ENCODE measurements at regions of chr1 and their contacts with region 1.

Region 1: GRCh38 chr1:234373064-234373958 is at the start of gene COA6:
- DNase-seq: peak; percentile 78 to 96 (median 86)
- ATAC-seq: peak; percentile 79
- H3K4me3 ChIP-seq: peak within 1 kb of the TSS; percentile 79
- H3K4me3 Mint-ChIP-seq: peak within 1 kb of the TSS; percentile 97
- H3K27ac ChIP-seq: peak within 1 kb of the TSS; percentile 95 to 98
- H3K27ac Mint-ChIP-seq: peak within 1 kb of the TSS; percentile 99
- H3K4me1 ChIP-seq: peaks cover 36% of the 10 kb centered on the region
- H3K4me1 Mint-ChIP-seq: peaks cover 66% of the 10 kb centered on the region
- H3K27me3 ChIP-seq: no peaks in the 10 kb centered on the region
- H3K27me3 Mint-ChIP-seq: no peaks in the 10 kb centered on the region
- CTCF ChIP-seq: no peak
- total RNA-seq, gene COA6: 10.0 to 12.2 TPM

Region 2: DNA sequence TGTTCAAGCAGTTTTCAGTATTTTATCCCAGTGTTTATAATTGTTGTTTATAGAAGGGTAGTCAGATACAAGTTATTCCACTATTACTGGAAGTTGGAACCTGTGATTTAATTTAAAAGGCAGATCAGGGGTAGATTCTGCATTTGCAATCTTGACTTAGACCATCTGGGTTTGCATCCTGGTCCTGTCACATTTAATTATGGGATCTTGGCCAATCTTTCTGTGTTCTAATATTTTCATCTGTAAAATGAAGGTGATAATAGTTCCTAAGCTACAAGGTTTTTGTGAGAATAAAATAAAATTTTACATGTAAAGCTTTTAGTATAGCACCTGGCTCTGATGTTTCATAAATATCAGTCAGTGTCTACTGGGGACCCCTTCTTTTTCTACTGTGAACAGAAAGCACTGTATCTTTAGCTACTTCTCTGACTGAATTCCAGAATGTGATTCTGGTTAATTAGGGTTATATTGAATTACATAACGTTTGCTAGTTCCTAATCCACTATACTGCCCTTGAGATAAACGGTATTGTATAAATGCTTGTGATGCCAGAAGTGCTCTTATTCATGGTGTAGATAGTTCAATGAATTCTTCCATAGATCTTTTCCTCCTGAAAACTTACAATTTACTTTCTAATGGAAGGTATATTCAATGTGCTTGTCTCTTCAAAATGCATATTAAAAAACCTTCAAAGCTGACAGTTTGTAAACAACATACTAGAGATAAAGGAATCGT is 628.4 kb before region 1 on chr1:
- CTCF ChIA-PET with region 1: no interaction called
- POLR2A ChIA-PET with region 1: no interaction called
- intact Hi-C with region 1: no loop called
- DNase-seq: no peak
- ATAC-seq: no peak
- H3K4me3 ChIP-seq: no peak overlapping the region
- H3K4me3 Mint-ChIP-seq: no peak overlapping the region
- H3K27ac ChIP-seq: no peak overlapping the region
- H3K27ac Mint-ChIP-seq: no peak overlapping the region
- H3K4me1 ChIP-seq: no peaks in the 10 kb centered on the region
- H3K4me1 Mint-ChIP-seq: no peaks in the 10 kb centered on the region
- H3K27me3 ChIP-seq: peaks cover 5 to 13% of the 10 kb centered on the region in 2 experiments
- H3K27me3 Mint-ChIP-seq: peaks cover 30% of the 10 kb centered on the region
- CTCF ChIP-seq: no peak

Region 3: GRCh38 chr1:234315091-234315541 is 58.2 kb before region 1 on chr1:
- CTCF ChIA-PET with region 1: interaction called, 4 read pairs
- POLR2A ChIA-PET with region 1: interaction called, 15 read pairs
- intact Hi-C with region 1: no loop called
- DNase-seq: peak in 8 of 14 experiments; percentile 30 to 85 (median 42)
- ATAC-seq: peak; percentile 89
- H3K4me3 ChIP-seq: no peak overlapping the region
- H3K4me3 Mint-ChIP-seq: peak overlapping the region; percentile 5
- H3K27ac ChIP-seq: peak overlapping the region in 1 of 2 donors; percentile 93
- H3K27ac Mint-ChIP-seq: peak overlapping the region; percentile 92
- H3K4me1 ChIP-seq: peaks cover 60% of the 10 kb centered on the region
- H3K4me1 Mint-ChIP-seq: peaks cover 40% of the 10 kb centered on the region
- H3K27me3 ChIP-seq: no peaks in the 10 kb centered on the region
- H3K27me3 Mint-ChIP-seq: no peaks in the 10 kb centered on the region
- CTCF ChIP-seq: no peak

Region 4: DNA sequence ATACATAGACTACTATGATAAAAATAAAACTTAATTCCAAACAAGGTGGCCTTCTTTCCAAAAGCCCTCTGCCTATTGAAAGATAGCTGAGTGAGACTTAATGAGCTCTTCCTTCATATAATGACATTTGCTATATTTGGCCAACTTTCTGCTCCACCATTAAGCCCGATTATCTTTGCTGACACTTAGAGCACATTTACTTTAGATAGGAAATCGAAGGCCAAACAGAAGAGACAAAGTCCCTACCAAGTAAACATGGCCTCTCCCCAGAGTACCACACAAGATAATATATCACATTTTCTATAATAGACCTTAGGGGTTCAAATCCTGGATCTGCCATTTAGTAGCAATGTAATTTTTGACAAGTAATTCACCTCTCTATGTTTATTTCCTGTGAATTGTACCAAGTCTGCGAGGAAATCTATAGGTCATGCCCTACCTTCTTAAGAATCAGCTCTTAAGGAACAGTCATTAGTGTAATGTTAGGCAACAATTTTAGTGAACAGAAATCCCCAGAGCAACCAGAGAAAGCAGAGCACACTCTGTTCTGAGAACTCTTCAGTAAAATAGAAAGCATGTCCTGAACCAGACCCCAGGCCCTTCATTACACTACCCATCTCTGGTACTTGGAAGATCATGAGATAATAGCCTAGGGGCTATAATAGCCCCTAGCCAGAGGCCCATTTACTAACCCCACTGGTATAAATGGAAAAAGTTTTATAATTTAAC is 17.4 kb before region 1 on chr1:
- CTCF ChIA-PET with region 1: no interaction called
- POLR2A ChIA-PET with region 1: interaction called, 11 read pairs
- intact Hi-C with region 1: no loop called
- DNase-seq: no peak
- ATAC-seq: no peak
- H3K4me3 ChIP-seq: peak overlapping the region; percentile 56
- H3K4me3 Mint-ChIP-seq: no peak overlapping the region
- H3K27ac ChIP-seq: no peak overlapping the region
- H3K27ac Mint-ChIP-seq: peak overlapping the region; percentile 80
- H3K4me1 ChIP-seq: no peaks in the 10 kb centered on the region
- H3K4me1 Mint-ChIP-seq: no peaks in the 10 kb centered on the region
- H3K27me3 ChIP-seq: no peaks in the 10 kb centered on the region
- H3K27me3 Mint-ChIP-seq: no peaks in the 10 kb centered on the region
- CTCF ChIP-seq: no peak

Region 5: DNA sequence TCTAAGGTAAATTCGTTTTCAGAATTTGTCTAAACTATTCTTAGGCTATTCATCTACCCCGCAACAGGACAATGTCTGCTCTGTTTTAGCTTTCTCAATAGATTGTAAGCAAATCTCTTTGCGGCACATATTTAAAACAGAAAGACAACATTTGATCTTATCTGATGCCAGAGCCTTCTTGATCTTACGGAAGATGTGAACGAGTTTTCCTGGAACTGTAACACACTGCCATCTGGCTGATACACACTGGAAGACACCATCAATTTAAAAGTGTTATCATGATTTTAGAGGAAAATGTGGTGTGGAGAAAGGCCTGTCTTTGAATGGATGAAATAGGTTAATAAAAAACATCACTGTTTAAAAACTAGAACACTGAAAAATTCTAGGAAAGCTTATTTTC is 36.0 kb after region 1 on chr1:
- CTCF ChIA-PET with region 1: interaction called, 5 read pairs
- POLR2A ChIA-PET with region 1: interaction called, 54 read pairs
- intact Hi-C with region 1: loop called (anchors 1 to 5 kb)
- DNase-seq: peak in 7 of 14 experiments; percentile 8 to 84 (median 41)
- ATAC-seq: peak; percentile 57
- H3K4me3 ChIP-seq: peak overlapping the region; percentile 38
- H3K4me3 Mint-ChIP-seq: peak overlapping the region; percentile 67
- H3K27ac ChIP-seq: peak overlapping the region; percentile 77
- H3K27ac Mint-ChIP-seq: peak overlapping the region; percentile 91
- H3K4me1 ChIP-seq: peaks cover 18% of the 10 kb centered on the region
- H3K4me1 Mint-ChIP-seq: peaks cover 50% of the 10 kb centered on the region
- H3K27me3 ChIP-seq: no peaks in the 10 kb centered on the region
- H3K27me3 Mint-ChIP-seq: no peaks in the 10 kb centered on the region
- CTCF ChIP-seq: peak; percentile 78

Region 6: GRCh38 chr1:234433563-234434285 is 60.4 kb after region 1 on chr1:
- CTCF ChIA-PET with region 1: no interaction called
- POLR2A ChIA-PET with region 1: no interaction called
- intact Hi-C with region 1: no loop called
- DNase-seq: no peak
- ATAC-seq: no peak
- H3K4me3 ChIP-seq: no peak overlapping the region
- H3K4me3 Mint-ChIP-seq: no peak overlapping the region
- H3K27ac ChIP-seq: no peak overlapping the region
- H3K27ac Mint-ChIP-seq: no peak overlapping the region
- H3K4me1 ChIP-seq: no peaks in the 10 kb centered on the region
- H3K4me1 Mint-ChIP-seq: peaks cover 4% of the 10 kb centered on the region
- H3K27me3 ChIP-seq: no peaks in the 10 kb centered on the region
- H3K27me3 Mint-ChIP-seq: no peaks in the 10 kb centered on the region
- CTCF ChIP-seq: no peak

Region 7: GRCh38 chr1:234599617-234600417 is 226.5 kb after region 1 on chr1:
- CTCF ChIA-PET with region 1: no interaction called
- POLR2A ChIA-PET with region 1: no interaction called
- intact Hi-C with region 1: loop called in 1 of 2 experiments (anchors 5 kb)
- DNase-seq: peak; percentile 28 to 94 (median 66)
- ATAC-seq: peak; percentile 62
- H3K4me3 ChIP-seq: peak overlapping the region; percentile 65
- H3K4me3 Mint-ChIP-seq: peak overlapping the region; percentile 90
- H3K27ac ChIP-seq: peak overlapping the region; percentile 81 to 95
- H3K27ac Mint-ChIP-seq: peak overlapping the region; percentile 98
- H3K4me1 ChIP-seq: peaks cover 45% of the 10 kb centered on the region
- H3K4me1 Mint-ChIP-seq: peaks cover 61% of the 10 kb centered on the region
- H3K27me3 ChIP-seq: no peaks in the 10 kb centered on the region
- H3K27me3 Mint-ChIP-seq: no peaks in the 10 kb centered on the region
- CTCF ChIP-seq: no peak

Region 8: DNA sequence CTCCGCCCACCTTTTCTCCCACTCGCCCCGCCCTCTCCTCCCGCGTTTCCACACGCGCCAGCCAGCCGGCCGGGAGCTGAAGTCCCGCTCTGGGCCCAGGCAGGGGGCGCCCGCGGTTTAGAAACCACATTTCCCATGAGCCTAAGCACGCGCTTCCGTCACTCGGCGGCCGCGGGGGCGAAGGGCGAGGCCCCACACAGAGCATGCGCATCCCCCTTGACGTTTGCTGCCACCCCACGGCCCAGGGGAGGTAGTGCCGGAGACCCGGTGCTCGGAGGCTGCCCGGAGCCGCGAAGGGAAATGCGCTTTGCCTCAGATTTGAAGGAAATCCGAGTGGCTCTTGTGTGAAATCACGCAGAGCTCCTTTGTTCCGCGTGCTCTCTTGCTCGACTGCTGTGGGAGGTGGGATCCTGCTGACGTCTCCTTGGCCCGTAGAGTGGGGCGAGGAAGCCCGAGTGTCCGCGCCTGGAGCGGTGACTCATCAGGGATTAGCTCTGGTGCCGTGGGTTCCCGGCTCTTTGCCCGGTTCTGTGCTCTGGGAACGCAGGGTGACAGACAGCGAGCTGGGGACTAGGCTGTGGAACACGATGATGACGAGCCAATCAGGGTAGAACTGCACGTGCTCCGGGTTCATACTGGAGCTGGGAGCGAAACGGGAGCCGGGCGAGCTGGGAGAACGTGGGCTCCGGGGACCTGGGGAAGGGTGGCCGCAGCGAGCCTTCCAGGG is 1131.3 kb after region 1 on chr1:
- CTCF ChIA-PET with region 1: interaction called, 5 read pairs
- POLR2A ChIA-PET with region 1: interaction called, 6 read pairs
- intact Hi-C with region 1: loop called in 1 of 2 experiments (anchors 5 kb)
- DNase-seq: peak; percentile 96 to 100 (median 98)
- ATAC-seq: peak; percentile 86
- H3K4me3 ChIP-seq: peak overlapping the region; percentile 79
- H3K4me3 Mint-ChIP-seq: peak overlapping the region; percentile 92
- H3K27ac ChIP-seq: peak overlapping the region; percentile 89 to 93
- H3K27ac Mint-ChIP-seq: peak overlapping the region; percentile 96
- H3K4me1 ChIP-seq: peaks cover 15% of the 10 kb centered on the region
- H3K4me1 Mint-ChIP-seq: peaks cover 20% of the 10 kb centered on the region
- H3K27me3 ChIP-seq: no peaks in the 10 kb centered on the region
- H3K27me3 Mint-ChIP-seq: no peaks in the 10 kb centered on the region
- CTCF ChIP-seq: peak; percentile 91